Activated CD4-positive, alpha-beta memory T cell treated with anti-CD3 and anti-CD28 coated beads for 36 hours (primary cell): ENCODE measurements at regions of chr2 and their contacts with region 1.

Region 1: DNA sequence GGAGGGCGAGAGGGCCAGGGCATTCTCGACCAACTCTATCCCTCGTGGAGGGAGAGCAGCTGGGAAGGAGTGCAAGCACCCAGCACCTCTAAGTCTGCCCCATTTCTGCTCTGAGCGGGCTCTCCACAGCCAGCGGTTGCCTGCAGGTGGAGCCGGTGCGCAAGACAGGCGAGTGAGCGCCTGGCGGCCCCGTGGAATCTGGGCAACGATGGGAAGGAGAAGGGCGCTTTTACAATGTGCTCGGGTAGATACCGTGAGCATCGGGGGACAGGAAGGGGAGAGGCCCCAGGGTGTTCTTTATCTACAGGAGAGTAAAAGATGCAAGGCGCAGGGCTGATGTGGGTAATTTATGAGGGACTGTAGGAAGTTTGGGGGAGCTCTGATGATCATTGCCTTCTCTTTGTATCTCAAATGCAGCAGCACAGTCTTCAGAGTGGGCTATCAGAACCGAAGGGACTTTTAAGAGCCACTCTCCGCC is 867 bp upstream of the TTL start:
- DNase-seq: peak; percentile 92
- H3K4me3 Mint-ChIP-seq: peak overlapping the region; percentile 81
- H3K27ac Mint-ChIP-seq: peak overlapping the region; percentile 77
- H3K4me1 Mint-ChIP-seq: peaks cover 28% of the 10 kb centered on the region
- H3K27me3 Mint-ChIP-seq: no peaks in the 10 kb centered on the region

Region 2: DNA sequence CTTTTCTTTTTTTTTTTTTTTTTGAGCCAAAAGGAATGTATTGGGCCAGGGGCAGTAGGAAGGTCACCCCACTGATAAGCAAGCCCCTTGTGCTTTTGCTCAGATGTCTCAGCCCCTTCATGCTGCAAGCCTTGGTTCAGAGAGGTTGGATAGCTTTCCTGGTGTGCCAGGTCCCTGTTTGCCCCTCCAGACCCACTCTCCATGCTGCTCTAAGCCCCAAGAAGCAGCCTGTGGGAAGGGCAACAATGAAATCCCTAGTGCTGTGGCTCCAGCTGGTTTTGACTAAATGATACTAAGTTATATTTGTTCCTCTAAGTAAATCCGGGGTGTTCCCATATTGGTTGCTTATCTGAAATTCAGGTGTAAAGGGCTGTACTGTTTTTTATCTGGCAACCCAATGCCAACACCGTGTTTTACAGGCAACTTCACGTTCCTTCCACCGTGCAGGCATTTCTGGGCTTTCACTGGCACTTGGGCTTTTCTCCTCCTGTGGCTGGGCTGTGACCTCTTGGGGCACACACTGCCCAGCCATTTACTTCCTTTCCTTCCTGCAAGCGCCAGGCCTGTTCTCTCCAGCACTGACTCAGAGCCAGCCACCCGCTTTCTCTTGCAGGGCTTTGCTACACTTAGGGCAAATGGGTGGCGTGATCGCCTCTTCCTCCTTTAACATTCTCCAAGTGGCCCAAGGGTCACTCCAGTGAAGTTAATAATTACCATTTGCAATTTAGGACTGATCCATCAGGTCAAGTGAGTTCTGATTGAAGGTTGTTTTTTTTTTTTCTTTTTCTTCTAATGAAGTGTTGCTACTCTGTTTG is 561.1 kb before region 1 on chr2:
- CTCF ChIA-PET with region 1: no interaction called
- POLR2A ChIA-PET with region 1: no interaction called
- intact Hi-C with region 1: no loop called
- DNase-seq: no peak
- H3K4me3 Mint-ChIP-seq: no peak overlapping the region
- H3K27ac Mint-ChIP-seq: no peak overlapping the region
- H3K4me1 Mint-ChIP-seq: peaks cover 4% of the 10 kb centered on the region
- H3K27me3 Mint-ChIP-seq: peaks cover 2% of the 10 kb centered on the region

Region 3: GRCh38 chr2:112433932-112434730 is 47.0 kb before region 1 on chr2:
- CTCF ChIA-PET with region 1: no interaction called
- POLR2A ChIA-PET with region 1: no interaction called
- intact Hi-C with region 1: loop called (anchors 5 kb)
- DNase-seq: no peak
- H3K4me3 Mint-ChIP-seq: no peak overlapping the region
- H3K27ac Mint-ChIP-seq: no peak overlapping the region
- H3K4me1 Mint-ChIP-seq: peaks cover 14% of the 10 kb centered on the region
- H3K27me3 Mint-ChIP-seq: peaks cover 9% of the 10 kb centered on the region

Region 4: GRCh38 chr2:112493858-112494648 is 13.0 kb after region 1 on chr2:
- CTCF ChIA-PET with region 1: interaction called, 19 read pairs
- POLR2A ChIA-PET with region 1: no interaction called
- intact Hi-C with region 1: no loop called
- DNase-seq: no peak
- H3K4me3 Mint-ChIP-seq: no peak overlapping the region
- H3K27ac Mint-ChIP-seq: no peak overlapping the region
- H3K4me1 Mint-ChIP-seq: peaks cover 5% of the 10 kb centered on the region
- H3K27me3 Mint-ChIP-seq: no peaks in the 10 kb centered on the region

Region 5: DNA sequence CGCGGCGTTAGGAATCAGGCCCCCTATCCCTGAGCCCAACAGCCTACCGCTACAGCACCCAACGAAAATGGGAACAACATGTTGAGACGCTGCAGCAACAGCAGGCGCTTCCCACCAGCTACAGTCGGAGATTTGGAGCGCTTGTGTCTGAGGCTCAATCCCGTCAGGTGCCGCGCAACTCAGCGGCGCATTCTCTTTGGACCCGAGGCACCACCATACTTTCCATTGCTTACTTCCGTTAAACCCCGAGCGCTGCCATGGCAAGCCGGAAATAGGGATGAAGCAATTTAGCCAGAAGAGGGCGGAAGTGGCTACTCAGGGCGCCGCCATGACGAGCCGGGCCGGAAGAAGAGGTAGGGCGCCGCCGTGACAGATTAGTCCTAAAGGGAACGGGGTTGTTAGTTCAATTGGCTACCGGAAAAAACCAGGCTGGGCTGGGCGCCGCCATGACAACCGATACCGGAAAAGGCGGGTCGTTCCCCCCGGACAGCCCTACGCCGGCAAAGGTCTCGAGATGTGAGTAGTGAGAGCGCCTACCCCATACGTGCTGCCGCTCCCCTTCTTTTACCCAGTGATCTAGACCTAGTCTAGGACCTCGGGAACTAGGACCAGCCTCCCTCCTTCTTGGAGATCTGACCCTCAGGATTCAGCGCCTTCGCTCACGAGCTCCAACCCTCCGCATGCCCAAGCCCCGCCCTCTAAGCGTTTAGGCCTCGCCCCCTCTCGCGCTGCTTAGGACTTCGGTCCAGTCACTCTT is 103.2 kb after region 1 on chr2 and contains the start of gene CHCHD5:
- CTCF ChIA-PET with region 1: interaction called, 9 read pairs
- POLR2A ChIA-PET with region 1: no interaction called
- intact Hi-C with region 1: loop called (anchors 1 kb)
- DNase-seq: peak; percentile 97
- H3K4me3 Mint-ChIP-seq: peak within 1 kb of the TSS; percentile 97
- H3K27ac Mint-ChIP-seq: peak within 1 kb of the TSS; percentile 99
- H3K4me1 Mint-ChIP-seq: peaks cover 30% of the 10 kb centered on the region
- H3K27me3 Mint-ChIP-seq: no peaks in the 10 kb centered on the region
- total RNA-seq, gene CHCHD5: 39.3 to 41.4 TPM

Region 6: GRCh38 chr2:112692496-112692911 is 211.4 kb after region 1 on chr2:
- CTCF ChIA-PET with region 1: no interaction called
- POLR2A ChIA-PET with region 1: no interaction called
- intact Hi-C with region 1: loop called (anchors 5 kb)
- DNase-seq: peak; percentile 87
- H3K4me3 Mint-ChIP-seq: peak overlapping the region; percentile 30
- H3K27ac Mint-ChIP-seq: peak overlapping the region; percentile 84
- H3K4me1 Mint-ChIP-seq: peaks cover 33% of the 10 kb centered on the region
- H3K27me3 Mint-ChIP-seq: no peaks in the 10 kb centered on the region

Region 7: DNA sequence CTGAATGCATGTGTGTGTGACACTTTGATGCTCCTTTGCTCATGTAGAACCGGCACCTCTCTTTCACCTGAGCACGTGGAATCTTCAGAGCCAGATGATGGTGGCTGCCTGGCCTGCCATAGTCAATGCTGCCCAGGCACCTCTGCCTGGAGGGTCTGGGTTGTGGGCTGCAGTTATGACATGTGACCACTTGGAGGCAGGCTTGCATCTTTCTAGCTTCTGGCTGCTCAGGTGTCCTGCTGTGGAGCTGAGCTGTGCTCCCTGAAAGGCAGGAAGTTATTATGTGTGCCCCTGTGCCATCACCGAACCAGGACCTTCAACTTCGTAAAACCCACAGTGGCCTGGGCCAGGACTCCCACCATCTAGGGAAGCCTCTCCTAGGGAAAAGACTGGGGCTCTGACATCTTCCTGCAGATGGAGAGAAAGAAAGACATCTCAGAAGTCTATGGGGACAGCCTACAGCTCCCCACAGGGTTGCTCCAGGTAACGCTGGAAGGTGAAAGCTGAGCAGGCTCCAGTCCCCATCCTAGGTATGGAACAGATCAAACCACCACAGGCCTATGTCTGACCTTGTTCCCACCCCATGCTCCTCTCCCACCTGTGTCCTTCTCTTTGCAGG is 722.9 kb after region 1 on chr2:
- CTCF ChIA-PET with region 1: no interaction called
- POLR2A ChIA-PET with region 1: no interaction called
- intact Hi-C with region 1: no loop called
- DNase-seq: peak; percentile 85
- H3K4me3 Mint-ChIP-seq: no peak overlapping the region
- H3K27ac Mint-ChIP-seq: peak overlapping the region; percentile 79
- H3K4me1 Mint-ChIP-seq: peaks cover 10% of the 10 kb centered on the region
- H3K27me3 Mint-ChIP-seq: no peaks in the 10 kb centered on the region